CD8-positive, alpha-beta memory T cell (primary cell): ENCODE measurements at regions of chr6 and their contacts with region 1.

Region 1: DNA sequence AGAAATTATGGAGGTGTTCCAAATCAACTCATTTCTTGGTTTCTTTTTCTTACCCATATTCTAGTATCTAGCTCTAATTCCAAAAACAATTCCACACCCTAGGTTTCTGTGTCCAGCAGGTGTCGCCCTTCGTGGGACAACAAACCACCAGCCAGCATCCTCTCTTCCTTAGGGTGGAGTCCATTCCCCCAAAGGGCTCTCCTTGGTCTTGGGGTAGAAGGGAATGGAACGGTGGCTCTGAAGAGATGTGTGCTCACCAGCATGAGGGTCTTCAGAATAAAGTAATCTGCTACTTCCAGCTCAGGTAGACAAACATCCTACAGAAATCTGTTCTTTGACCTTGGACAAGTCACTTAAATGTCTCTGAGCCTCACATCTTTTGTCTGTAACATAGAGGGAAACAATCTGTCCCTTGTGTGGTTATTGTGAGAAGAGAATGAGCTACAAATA is 7.2 kb downstream of the HLA-DMB start:
- DNase-seq: peak; percentile 60 to 84 (median 68)
- H3K4me3 ChIP-seq: no peak overlapping the region
- H3K4me3 Mint-ChIP-seq: no peak overlapping the region
- H3K27ac ChIP-seq: no peak overlapping the region
- H3K27ac Mint-ChIP-seq: peak overlapping the region in 1 of 8 donors; percentile 24
- H3K4me1 ChIP-seq: no peaks in the 10 kb centered on the region
- H3K4me1 Mint-ChIP-seq: peaks cover 6 to 10% (median 7%) of the 10 kb centered on the region in 3 donors
- H3K27me3 ChIP-seq: no peaks in the 10 kb centered on the region
- H3K27me3 Mint-ChIP-seq: peaks cover 0 to 2% of the 10 kb centered on the region in 2 donors

Region 2: DNA sequence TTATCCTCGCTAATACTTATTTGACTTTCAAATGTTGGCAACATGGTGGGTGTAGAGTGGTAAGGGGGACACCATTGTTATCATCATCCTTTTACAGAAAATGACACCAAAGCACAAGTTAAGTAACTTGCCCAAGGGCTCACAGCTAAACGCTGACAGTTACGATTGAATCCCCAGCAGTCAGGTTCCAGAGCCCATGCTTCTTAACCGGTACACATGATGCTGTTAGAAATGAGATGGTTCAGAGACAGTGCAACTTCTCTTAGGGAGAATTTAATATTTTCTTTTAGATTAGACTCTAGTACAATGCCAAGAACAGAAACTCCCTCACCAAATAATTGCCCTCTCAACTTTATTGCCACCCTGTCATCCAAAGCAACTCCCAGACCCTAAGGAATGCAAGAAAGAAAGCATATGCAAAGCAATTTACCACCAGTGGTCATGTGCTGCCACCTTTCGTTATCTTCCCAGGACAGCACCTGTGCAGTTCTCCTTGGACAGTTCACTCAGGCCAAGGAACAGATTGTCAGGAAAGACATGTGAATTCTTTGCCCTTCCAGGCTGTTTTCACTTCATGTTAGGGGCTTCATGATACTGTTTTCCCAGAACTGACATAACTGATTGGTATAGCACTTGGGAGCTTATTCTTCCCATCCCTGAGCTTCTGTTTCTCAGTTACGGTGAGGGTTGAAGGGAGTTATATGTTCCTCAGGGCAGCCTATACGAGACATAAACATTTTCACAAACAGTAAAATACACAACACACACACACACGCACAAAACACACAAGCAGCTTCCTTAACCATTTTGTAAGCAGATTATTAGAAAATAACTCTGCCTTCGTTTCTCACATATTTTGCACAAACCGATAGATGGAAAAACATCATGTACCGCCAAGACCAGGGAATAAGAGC is 14.1 kb after region 1 on chr6:
- CTCF ChIA-PET with region 1: interaction called, 97 read pairs
- POLR2A ChIA-PET with region 1: interaction called, 4 read pairs
- DNase-seq: peak in 3 of 5 donors; percentile 18 to 37 (median 35)
- H3K4me3 ChIP-seq: no peak overlapping the region
- H3K4me3 Mint-ChIP-seq: no peak overlapping the region
- H3K27ac ChIP-seq: no peak overlapping the region
- H3K27ac Mint-ChIP-seq: peak overlapping the region in 4 of 8 donors; percentile 6 to 74 (median 32)
- H3K4me1 ChIP-seq: peaks cover 44% of the 10 kb centered on the region
- H3K4me1 Mint-ChIP-seq: peaks cover 49 to 85% (median 75%) of the 10 kb centered on the region in 3 donors
- H3K27me3 ChIP-seq: no peaks in the 10 kb centered on the region
- H3K27me3 Mint-ChIP-seq: no peaks in the 10 kb centered on the region

Region 3: GRCh38 chr6:32962213-32962826 is 28.7 kb after region 1 on chr6:
- CTCF ChIA-PET with region 1: interaction called, 98 read pairs
- POLR2A ChIA-PET with region 1: interaction called, 107 read pairs
- DNase-seq: no peak
- H3K4me3 ChIP-seq: no peak overlapping the region
- H3K4me3 Mint-ChIP-seq: peak overlapping the region in 2 of 7 donors; percentile 16 to 34
- H3K27ac ChIP-seq: no peak overlapping the region
- H3K27ac Mint-ChIP-seq: peak overlapping the region in 7 of 8 donors; percentile 5 to 64 (median 44)
- H3K4me1 ChIP-seq: peaks cover 34% of the 10 kb centered on the region
- H3K4me1 Mint-ChIP-seq: peaks cover 61 to 82% (median 61%) of the 10 kb centered on the region in 3 donors
- H3K27me3 ChIP-seq: no peaks in the 10 kb centered on the region
- H3K27me3 Mint-ChIP-seq: peaks cover 0 to 3% of the 10 kb centered on the region in 2 donors